Esophagus muscularis mucosa (tissue), 4 donors: ENCODE measurements at regions of chr12 and their contacts with region 1.

Region 1: GRCh38 chr12:53352331-53353256 is 16.4 kb upstream of the SP7 start:
- DNase-seq: peak; percentile 96
- H3K4me3 ChIP-seq: no peak overlapping the region
- H3K27ac ChIP-seq: no peak overlapping the region
- H3K4me1 ChIP-seq: peaks cover 0 to 9% (median 5%) of the 10 kb centered on the region in 4 donors
- H3K27me3 ChIP-seq: no peaks in the 10 kb centered on the region
- CTCF ChIP-seq: peak; percentile 92 to 95 (median 93)
- EP300 ChIP-seq: no peak
- POLR2A ChIP-seq: no peak

Region 2: GRCh38 chr12:53413485-53414204 is 61.1 kb after region 1 on chr12:
- intact Hi-C with region 1: no loop called
- DNase-seq: no peak
- H3K4me3 ChIP-seq: peak overlapping the region in 1 of 4 donors; percentile 10
- H3K27ac ChIP-seq: peak overlapping the region; percentile 33 to 64 (median 43)
- H3K4me1 ChIP-seq: peaks cover 37 to 53% (median 42%) of the 10 kb centered on the region in 4 donors
- H3K27me3 ChIP-seq: no peaks in the 10 kb centered on the region
- CTCF ChIP-seq: no peak
- EP300 ChIP-seq: no peak
- POLR2A ChIP-seq: no peak

Region 3: DNA sequence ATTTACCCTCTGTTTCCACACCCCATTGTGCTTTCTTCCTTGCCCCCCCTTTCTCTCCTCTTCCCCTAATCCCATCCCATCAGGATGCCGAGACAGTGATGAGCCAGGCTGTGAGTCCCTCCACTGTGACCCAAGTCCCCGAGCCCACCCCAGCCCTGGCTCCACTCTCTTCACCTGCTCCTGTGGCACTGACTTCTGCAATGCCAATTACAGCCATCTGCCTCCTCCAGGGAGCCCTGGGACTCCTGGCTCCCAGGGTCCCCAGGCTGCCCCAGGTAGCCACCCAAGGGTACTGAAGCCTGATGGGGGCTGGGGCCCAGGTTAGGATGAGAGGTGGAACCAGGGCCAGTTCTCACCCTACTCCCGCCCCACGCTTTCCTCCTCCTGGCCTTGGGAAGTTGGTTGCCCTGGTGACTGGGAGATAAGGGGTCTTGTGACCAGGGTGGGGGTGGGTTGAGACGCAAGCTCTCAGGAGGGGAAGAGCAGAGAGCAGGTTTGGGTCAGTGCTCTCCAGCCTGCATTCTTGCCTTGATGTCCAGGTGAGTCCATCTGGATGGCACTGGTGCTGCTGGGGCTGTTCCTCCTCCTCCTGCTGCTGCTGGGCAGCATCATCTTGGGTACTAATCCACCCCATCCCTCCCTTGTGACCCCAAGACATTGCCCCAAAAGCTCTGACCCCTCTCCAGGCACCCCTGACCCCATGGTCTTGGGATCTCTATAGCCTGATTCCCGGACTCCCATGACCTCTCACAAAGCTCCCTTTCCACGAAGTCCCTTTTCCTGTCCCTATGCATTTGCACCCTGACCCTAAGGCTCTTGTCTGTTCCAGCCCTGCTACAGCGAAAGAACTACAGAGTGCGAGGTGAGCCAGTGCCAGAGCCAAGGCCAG is 72.3 kb after region 1 on chr12:
- intact Hi-C with region 1: loop called (anchors 1 kb)
- DNase-seq: no peak
- H3K4me3 ChIP-seq: no peak overlapping the region
- H3K27ac ChIP-seq: no peak overlapping the region
- H3K4me1 ChIP-seq: peaks cover 7 to 9% (median 8%) of the 10 kb centered on the region in 4 donors
- H3K27me3 ChIP-seq: no peaks in the 10 kb centered on the region
- CTCF ChIP-seq: no peak
- EP300 ChIP-seq: no peak
- POLR2A ChIP-seq: no peak

Region 4: DNA sequence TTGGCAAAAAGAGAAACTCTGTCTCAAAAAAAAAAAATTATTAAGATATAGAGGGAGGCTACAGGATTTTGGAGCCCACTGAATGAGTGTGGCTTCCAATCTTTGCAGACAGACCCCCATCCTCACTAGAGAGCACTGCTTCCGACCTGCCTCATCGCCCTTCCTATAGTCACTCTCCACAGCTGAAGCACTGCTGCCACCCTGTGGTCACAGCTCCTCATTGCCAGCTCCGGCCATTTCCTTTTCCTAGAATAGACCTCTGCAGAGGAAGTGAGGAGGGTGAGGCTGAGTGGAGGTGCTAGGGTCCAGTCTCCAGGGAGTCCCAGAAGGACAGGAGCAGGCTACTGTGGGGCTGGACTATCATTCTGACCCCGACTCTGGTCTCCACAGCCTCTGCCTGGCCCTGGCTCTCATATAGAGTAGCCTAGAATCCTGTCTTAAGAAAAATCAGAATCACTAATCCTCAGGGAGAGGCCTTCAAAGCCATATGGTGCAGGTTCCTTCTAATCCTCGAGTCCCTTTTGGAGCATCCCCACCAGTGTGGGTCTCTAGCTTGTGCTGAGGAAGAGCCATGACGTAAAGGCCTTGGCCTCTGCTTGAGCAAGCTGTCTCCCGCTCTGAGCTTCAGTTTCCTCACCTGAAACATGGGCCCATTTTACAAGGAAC is 156.1 kb after region 1 on chr12:
- intact Hi-C with region 1: loop called (anchors 5 kb)
- DNase-seq: peak; percentile 97
- H3K4me3 ChIP-seq: no peak overlapping the region
- H3K27ac ChIP-seq: peak overlapping the region in 1 of 4 donors; percentile 44
- H3K4me1 ChIP-seq: peaks cover 6 to 24% (median 12%) of the 10 kb centered on the region in 4 donors
- H3K27me3 ChIP-seq: no peaks in the 10 kb centered on the region
- CTCF ChIP-seq: peak; percentile 88 to 97 (median 92)
- EP300 ChIP-seq: no peak
- POLR2A ChIP-seq: no peak